PC-3 (cell line): ENCODE measurements at regions of chr1 and their contacts with region 1.

Region 1: GRCh38 chr1:169893494-169894362 is at the start of gene SCYL3:
- DNase-seq: peak; percentile 90
- ATAC-seq: peak; percentile 88
- H3K4me3 ChIP-seq: peak within 1 kb of the TSS; percentile 89
- H3K27ac ChIP-seq: peak within 1 kb of the TSS; percentile 85
- H3K4me1 ChIP-seq: peaks cover 29% of the 10 kb centered on the region
- H3K27me3 ChIP-seq: no peaks in the 10 kb centered on the region
- CTCF ChIP-seq: no peak
- total RNA-seq, gene SCYL3: 3.1 and 3.6 TPM in 2 replicates

Region 2: DNA sequence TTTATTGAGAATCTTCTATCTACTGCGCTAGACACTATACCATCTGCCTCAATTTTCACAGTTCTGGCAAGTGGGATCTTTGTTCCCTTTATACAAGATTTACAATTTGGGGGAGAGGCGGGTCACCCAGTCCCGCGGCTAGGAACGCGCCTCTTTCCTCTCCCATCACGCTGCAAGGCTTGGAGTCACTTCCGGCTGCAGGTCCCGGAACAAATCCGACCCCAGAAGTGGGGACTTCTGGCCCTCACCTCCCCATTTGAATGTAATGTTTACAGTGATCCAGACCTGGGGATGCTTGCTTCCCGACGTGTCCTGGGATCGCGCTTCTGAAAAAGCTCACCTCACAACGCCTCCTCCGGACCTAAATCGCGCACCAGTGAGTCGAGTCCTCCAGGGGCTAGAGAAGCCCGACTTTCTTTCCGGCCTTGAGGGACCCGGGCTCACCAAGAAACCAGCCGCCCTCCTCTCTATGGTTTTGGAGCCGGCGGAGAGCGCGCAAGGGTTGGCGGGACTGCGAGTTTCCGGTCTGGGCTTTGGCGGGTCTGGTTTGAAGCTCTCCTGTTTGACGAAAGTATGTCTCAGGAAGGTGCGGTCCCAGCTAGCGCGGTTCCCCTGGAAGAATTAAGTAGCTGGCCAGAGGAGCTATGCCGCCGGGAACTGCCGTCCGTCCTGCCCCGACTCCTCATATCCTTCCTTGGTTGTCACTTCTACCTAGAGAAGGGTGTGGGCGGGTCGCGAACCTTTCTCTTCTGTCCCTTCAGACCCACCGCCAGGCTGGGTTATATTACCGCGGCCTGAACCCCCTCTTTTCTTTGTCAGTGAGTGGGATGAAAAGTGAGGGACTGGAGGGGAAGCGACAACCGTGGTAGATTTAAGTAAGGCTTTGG is 99.0 kb before region 1 on chr1 and contains the start of gene METTL18:
- CTCF ChIA-PET with region 1: no interaction called
- POLR2A ChIA-PET with region 1: no interaction called
- intact Hi-C with region 1: loop called (anchors 5 kb)
- DNase-seq: peak; percentile 98
- ATAC-seq: peak; percentile 98
- H3K4me3 ChIP-seq: peak within 1 kb of the TSS; percentile 83
- H3K27ac ChIP-seq: peak within 1 kb of the TSS; percentile 75
- H3K4me1 ChIP-seq: peaks cover 33% of the 10 kb centered on the region
- H3K27me3 ChIP-seq: no peaks in the 10 kb centered on the region
- CTCF ChIP-seq: no peak
- total RNA-seq, gene METTL18: 7.3 and 7.4 TPM in 2 replicates

Region 3: GRCh38 chr1:169844941-169845608 is 48.7 kb before region 1 on chr1:
- CTCF ChIA-PET with region 1: no interaction called
- POLR2A ChIA-PET with region 1: no interaction called
- intact Hi-C with region 1: loop called (anchors 5 kb)
- DNase-seq: no peak
- ATAC-seq: peak; percentile 70
- H3K4me3 ChIP-seq: no peak overlapping the region
- H3K27ac ChIP-seq: no peak overlapping the region
- H3K4me1 ChIP-seq: no peaks in the 10 kb centered on the region
- H3K27me3 ChIP-seq: no peaks in the 10 kb centered on the region
- CTCF ChIP-seq: no peak

Region 4: GRCh38 chr1:170162459-170163246 is 268.9 kb after region 1 on chr1:
- CTCF ChIA-PET with region 1: no interaction called
- POLR2A ChIA-PET with region 1: no interaction called
- intact Hi-C with region 1: no loop called
- DNase-seq: peak; percentile 23
- ATAC-seq: peak; percentile 37; the same call in 1 of the 2 replicates
- H3K4me3 ChIP-seq: no peak overlapping the region
- H3K27ac ChIP-seq: no peak overlapping the region
- H3K4me1 ChIP-seq: no peaks in the 10 kb centered on the region
- H3K27me3 ChIP-seq: no peaks in the 10 kb centered on the region
- CTCF ChIP-seq: no peak